ENCODE measurements at regions of chr10 and their contacts with region 1.

Region 1: DNA sequence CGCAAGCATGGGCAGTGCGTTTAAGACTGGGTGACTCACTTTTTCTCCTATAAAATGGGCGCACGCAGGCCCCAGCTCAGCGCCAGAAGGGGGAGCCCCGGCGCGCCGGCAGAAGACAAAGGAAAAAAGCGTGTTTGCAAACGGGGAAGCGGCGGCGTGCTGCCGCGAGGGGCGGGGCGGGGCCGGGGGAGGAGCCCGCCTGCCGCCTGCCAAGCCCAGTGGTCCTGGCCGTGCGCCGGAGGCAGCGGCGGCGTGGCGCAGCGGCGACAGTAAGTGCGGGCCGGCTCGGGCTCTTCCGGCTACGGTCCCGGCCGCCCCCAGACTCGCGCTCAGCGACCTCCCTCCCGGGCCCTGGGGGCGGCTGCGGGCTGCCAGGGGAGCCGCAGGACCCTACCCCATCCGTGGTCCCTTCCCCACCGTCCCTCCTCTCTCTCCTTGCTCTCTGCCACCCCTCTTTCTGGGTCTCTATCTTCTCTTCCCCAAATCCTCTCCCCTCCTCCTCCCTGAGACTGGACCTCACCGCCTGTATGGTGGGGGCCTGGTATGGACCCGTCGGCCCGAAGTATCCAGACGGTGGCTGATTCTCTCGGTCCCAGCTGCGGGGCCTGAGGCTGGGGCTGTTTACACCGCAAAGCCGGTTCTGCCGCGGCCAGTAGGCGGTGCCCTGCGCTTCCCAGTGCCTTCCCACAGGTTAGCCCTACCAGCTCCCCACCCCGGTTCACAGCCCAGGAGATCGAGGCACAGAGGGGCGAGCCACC is at the start of gene SLC29A3:
- DNase-seq: peak; percentile 88 to 92
- ATAC-seq: peak; percentile 91
- H3K4me3 ChIP-seq: peak within 1 kb of the TSS; percentile 8 to 67
- H3K27ac ChIP-seq: no peak within 1 kb of the TSS
- H3K4me1 ChIP-seq: peaks cover 0 to 1% of the 10 kb centered on the region in 2 donors
- H3K27me3 ChIP-seq: no peaks in the 10 kb centered on the region
- total RNA-seq, gene SLC29A3: 5.3 to 8.8 TPM

Region 2: GRCh38 chr10:71333129-71333887 is 14.1 kb after region 1 on chr10:
- intact Hi-C with region 1: no loop called
- DNase-seq: peak in 1 of 2 donors; percentile 82
- ATAC-seq: peak; percentile 10
- H3K4me3 ChIP-seq: no peak overlapping the region
- H3K27ac ChIP-seq: no peak overlapping the region
- H3K4me1 ChIP-seq: no peaks in the 10 kb centered on the region
- H3K27me3 ChIP-seq: no peaks in the 10 kb centered on the region

Region 3: DNA sequence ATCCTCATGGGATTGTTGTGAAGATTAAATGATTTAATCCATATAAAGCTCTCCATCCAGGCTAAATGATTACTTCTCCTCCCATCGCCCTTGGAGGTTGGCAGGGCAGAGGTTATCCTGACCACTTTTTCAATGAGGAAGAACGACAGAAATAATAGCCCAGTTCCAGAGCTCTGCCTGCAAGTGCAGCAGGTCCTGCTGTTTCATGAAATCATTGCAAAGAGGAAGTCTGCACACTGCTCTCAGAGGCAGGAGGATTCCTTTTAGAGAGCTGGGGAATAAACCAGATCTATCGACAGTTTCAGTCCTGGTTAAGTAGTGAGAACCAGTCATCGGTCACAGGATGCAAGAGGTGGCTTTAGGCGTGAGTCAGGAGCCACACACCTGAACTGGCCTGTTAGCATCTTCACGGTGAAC is 52.5 kb after region 1 on chr10:
- intact Hi-C with region 1: loop called in 1 of 2 experiments (anchors 10 kb)
- DNase-seq: peak in 1 of 2 donors; percentile 40
- ATAC-seq: no peak
- H3K4me3 ChIP-seq: no peak overlapping the region
- H3K27ac ChIP-seq: no peak overlapping the region
- H3K4me1 ChIP-seq: no peaks in the 10 kb centered on the region
- H3K27me3 ChIP-seq: no peaks in the 10 kb centered on the region

Region 4: DNA sequence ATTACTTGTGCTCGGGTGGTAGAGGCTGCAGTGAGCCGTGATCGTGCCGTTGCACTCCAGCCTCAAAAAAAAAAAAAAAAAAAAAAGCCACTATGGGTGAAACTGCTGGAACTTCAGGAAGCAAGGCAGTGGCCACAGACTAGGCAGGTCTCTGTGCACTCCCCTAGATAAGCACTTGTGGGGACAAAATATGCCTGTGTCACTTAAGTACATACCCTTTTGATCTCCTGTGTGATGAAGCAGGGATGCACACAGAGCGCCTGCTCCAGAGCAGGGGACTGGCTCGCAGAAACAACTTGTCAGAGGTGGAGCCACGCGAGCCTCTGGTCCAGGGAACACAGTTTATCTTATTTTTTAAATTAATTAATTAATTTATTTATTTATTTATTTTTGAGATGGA is 574.7 kb after region 1 on chr10:
- intact Hi-C with region 1: loop called (anchors 5 to 10 kb)
- DNase-seq: peak in 1 of 2 donors; percentile 34
- ATAC-seq: no peak
- H3K4me3 ChIP-seq: no peak overlapping the region
- H3K27ac ChIP-seq: no peak overlapping the region
- H3K4me1 ChIP-seq: no peaks in the 10 kb centered on the region
- H3K27me3 ChIP-seq: no peaks in the 10 kb centered on the region

Region 5: DNA sequence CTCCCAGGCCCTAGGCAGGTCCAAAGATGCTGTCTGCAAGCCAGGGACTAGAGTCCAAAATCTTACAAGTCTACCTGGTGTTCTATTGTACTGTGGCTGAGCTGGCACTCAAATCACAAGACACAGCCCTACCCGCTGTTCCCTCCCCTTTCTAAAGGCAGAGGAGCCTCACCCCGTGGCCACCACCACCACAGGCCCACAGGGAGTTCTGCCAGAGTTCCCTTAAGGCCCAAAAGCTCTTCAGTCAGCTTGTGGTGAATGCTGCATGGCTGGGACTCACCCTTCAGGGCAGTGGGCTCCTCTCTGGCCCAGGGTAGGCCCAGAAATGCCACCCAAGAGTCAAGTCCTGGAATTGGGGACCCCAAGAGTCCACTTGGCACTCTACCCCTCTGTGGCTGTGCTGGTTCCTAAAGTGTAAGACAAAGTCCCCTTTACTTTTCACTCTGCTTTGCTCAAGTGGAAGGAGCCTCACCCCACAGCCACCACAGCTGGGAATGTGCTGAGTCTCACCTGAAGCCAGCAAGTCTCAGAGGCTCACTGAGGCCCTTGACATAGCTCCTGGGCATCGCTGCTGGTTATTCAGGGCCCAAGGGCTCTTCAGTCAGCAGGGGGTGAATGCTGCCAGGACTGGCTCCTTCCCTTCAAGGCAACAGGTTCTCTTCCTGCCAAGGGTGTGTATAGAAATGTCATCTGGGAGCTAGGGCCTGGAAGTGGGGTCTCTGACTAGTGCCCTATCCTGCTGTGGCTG is 580.6 kb after region 1 on chr10:
- intact Hi-C with region 1: loop called (anchors 5 to 10 kb)
- DNase-seq: no peak
- ATAC-seq: no peak
- H3K4me3 ChIP-seq: no peak overlapping the region
- H3K27ac ChIP-seq: no peak overlapping the region
- H3K4me1 ChIP-seq: no peaks in the 10 kb centered on the region
- H3K27me3 ChIP-seq: no peaks in the 10 kb centered on the region